ENCODE measurements at regions of chr9 and their contacts with region 1.

Region 1: GRCh38 chr9:15422372-15423230 is at the start of gene SNAPC3:
- DNase-seq: peak; percentile 81
- ATAC-seq: peak; percentile 95
- H3K4me3 ChIP-seq: peak within 1 kb of the TSS; percentile 86
- H3K27ac ChIP-seq: peak within 1 kb of the TSS; percentile 72
- H3K4me1 ChIP-seq: peaks cover 8% of the 10 kb centered on the region; the same call in 1 of the 2 replicates
- H3K27me3 ChIP-seq: no peaks in the 10 kb centered on the region
- CTCF ChIP-seq: no peak
- EP300 ChIP-seq: peak; percentile 40 to 59; a peak in 2 of 4 replicates
- POLR2A ChIP-seq: peak; percentile 90
- RAD21 ChIP-seq: no peak
- polyA plus RNA-seq, gene SNAPC3: 5.7 to 7.4 TPM

Region 2: GRCh38 chr9:15306757-15307534 is 115.7 kb before region 1 on chr9 and contains the start of gene TTC39B:
- CTCF ChIA-PET with region 1: interaction called, 3 read pairs
- POLR2A ChIA-PET with region 1: interaction called, 4 read pairs
- RAD21 ChIA-PET with region 1: no interaction called
- SMC1A ChIA-PET with region 1: interaction called, 3 read pairs
- in situ Hi-C with region 1: no loop called
- intact Hi-C with region 1: loop called (anchors 5 kb)
- DNase-seq: no peak
- ATAC-seq: peak; percentile 96
- H3K4me3 ChIP-seq: peak within 1 kb of the TSS; percentile 84
- H3K27ac ChIP-seq: no peak within 1 kb of the TSS
- H3K4me1 ChIP-seq: peaks cover 8% of the 10 kb centered on the region; the same call in 1 of the 2 replicates
- H3K27me3 ChIP-seq: no peaks in the 10 kb centered on the region; a peak in 1 of 4 replicates
- CTCF ChIP-seq: no peak
- EP300 ChIP-seq: no peak
- POLR2A ChIP-seq: no peak
- RAD21 ChIP-seq: no peak
- polyA plus RNA-seq, gene TTC39B: 1.0 to 1.4 TPM

Region 3: DNA sequence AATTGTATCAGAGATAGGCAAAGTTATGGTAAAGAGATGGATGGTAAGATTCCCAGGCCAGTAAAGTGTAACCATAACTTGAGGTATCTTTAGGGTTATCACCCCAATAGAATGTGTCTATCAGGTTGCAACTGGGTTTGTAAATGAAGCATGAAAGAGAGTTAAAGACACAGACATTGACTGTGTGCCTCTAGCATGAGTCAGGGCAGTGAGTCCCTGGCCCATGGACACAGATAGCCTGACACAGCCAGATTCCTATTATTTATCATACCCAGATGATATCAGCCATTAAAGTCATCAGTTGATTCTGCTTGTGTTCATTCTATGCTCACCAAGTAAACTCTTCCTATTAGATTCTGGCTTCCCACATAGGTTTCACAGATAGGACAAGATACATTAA is 33.4 kb before region 1 on chr9:
- CTCF ChIA-PET with region 1: no interaction called
- POLR2A ChIA-PET with region 1: no interaction called
- RAD21 ChIA-PET with region 1: no interaction called
- SMC1A ChIA-PET with region 1: no interaction called
- in situ Hi-C with region 1: no loop called
- intact Hi-C with region 1: no loop called
- DNase-seq: no peak
- ATAC-seq: no peak
- H3K4me3 ChIP-seq: no peak overlapping the region
- H3K27ac ChIP-seq: no peak overlapping the region
- H3K4me1 ChIP-seq: no peaks in the 10 kb centered on the region
- H3K27me3 ChIP-seq: no peaks in the 10 kb centered on the region
- CTCF ChIP-seq: no peak
- EP300 ChIP-seq: no peak
- POLR2A ChIP-seq: no peak
- RAD21 ChIP-seq: no peak

Region 4: DNA sequence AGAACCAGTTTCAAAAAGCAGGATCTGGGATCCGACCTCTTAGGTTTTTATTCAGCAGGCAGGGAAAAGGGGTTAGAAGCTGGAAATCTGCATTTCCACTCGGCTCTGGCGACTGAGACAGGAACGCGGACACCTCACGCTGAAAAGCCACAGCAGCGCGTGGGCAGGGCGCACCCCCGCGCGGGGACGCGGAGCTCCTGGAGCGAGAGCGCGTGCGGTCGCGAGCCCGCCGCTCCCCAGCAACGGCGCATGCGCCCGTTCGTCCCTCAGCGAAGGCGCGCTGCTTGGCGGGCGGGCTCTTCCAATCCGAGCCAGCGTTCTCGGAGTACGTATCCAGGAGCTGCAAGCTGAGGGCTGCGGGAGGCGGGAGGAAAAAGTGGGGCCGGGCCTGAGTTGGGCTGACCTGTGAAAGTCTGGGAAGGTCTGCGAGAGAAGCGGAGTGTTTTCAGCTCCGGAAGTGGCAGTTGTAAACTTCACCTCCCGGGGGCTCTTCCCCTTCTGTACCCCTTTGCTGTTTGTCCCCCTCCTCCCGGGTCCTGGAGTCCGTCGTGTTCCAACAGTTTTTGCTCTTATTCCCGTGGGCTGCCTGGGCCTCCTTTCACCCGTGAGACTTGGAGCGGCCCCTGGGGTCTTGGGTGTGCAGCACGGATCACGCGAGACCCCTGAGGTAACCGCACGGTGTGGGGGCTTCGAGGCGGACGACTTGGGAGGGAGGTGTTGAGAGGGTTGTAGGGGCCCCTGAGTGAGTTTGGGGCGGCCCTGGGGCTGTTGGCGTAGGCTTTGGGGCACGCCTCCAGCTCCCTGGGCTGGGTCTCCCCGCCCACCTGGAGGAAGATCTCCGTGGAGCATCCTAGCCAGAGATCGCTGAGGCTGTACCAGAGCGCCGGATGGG is 130.3 kb after region 1 on chr9 and contains the start of gene CCDC171:
- CTCF ChIA-PET with region 1: interaction called, 5 read pairs
- POLR2A ChIA-PET with region 1: interaction called, 5 read pairs
- RAD21 ChIA-PET with region 1: interaction called, 10 read pairs
- SMC1A ChIA-PET with region 1: interaction called, 4 read pairs
- in situ Hi-C with region 1: no loop called
- intact Hi-C with region 1: no loop called
- DNase-seq: peak; percentile 75
- ATAC-seq: peak; percentile 88
- H3K4me3 ChIP-seq: peak within 1 kb of the TSS; percentile 95
- H3K27ac ChIP-seq: peak within 1 kb of the TSS; percentile 80
- H3K4me1 ChIP-seq: peaks cover 8% of the 10 kb centered on the region
- H3K27me3 ChIP-seq: no peaks in the 10 kb centered on the region
- CTCF ChIP-seq: no peak
- EP300 ChIP-seq: no peak; a peak in 1 of 4 replicates
- POLR2A ChIP-seq: peak; percentile 74
- RAD21 ChIP-seq: no peak
- polyA plus RNA-seq, gene CCDC171: 1.00 to 1.1 TPM

Measured in GM12878 (cell line).